ENCODE measurements at regions of chr14 and their contacts with region 1.

Region 1: GRCh38 chr14:106599209-106599608 is 1072.8 kb downstream of the TMEM121 start:
- DNase-seq: no peak
- ATAC-seq: no peak
- H3K4me3 ChIP-seq: no peak overlapping the region
- H3K4me3 Mint-ChIP-seq: no peak overlapping the region
- H3K27ac ChIP-seq: no peak overlapping the region
- H3K27ac Mint-ChIP-seq: no peak overlapping the region
- H3K4me1 ChIP-seq: no peaks in the 10 kb centered on the region
- H3K4me1 Mint-ChIP-seq: no peaks in the 10 kb centered on the region
- H3K27me3 ChIP-seq: no peaks in the 10 kb centered on the region
- H3K27me3 Mint-ChIP-seq: peaks cover 28 to 72% of the 10 kb centered on the region in 2 donors
- CTCF ChIP-seq: no peak

Region 2: DNA sequence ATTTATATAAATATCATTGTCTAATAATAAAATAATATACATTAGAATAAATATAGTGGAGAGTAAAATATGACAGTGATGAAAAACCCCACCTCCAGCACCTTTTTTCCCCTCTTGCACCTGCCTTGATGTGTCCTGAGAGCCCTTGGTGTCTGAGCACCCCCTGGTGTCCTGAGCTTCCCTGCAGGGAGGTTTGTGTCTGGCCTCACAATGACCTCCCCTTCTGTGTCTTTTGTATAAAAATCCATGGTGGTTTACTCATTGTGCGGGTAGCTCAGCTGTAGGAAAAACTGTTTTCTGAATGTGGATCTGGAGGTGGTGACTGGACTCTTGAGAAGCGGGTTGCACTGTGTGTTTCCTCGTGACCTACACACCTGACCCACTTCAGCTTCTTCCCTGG is 435.9 kb before region 1 on chr14:
- intact Hi-C with region 1: no loop called
- DNase-seq: no peak
- ATAC-seq: no peak
- H3K4me3 ChIP-seq: no peak overlapping the region
- H3K4me3 Mint-ChIP-seq: no peak overlapping the region
- H3K27ac ChIP-seq: no peak overlapping the region
- H3K27ac Mint-ChIP-seq: no peak overlapping the region
- H3K4me1 ChIP-seq: peaks cover 5% of the 10 kb centered on the region
- H3K4me1 Mint-ChIP-seq: peaks cover 9 to 10% of the 10 kb centered on the region in 2 donors
- H3K27me3 ChIP-seq: peaks cover 24% of the 10 kb centered on the region
- H3K27me3 Mint-ChIP-seq: peaks cover 56 to 84% of the 10 kb centered on the region in 2 donors
- CTCF ChIP-seq: no peak

Region 3: GRCh38 chr14:106501898-106502297 is 97.3 kb before region 1 on chr14:
- intact Hi-C with region 1: no loop called
- DNase-seq: no peak
- ATAC-seq: no peak
- H3K4me3 ChIP-seq: no peak overlapping the region
- H3K4me3 Mint-ChIP-seq: no peak overlapping the region
- H3K27ac ChIP-seq: no peak overlapping the region
- H3K27ac Mint-ChIP-seq: no peak overlapping the region
- H3K4me1 ChIP-seq: peaks cover 23% of the 10 kb centered on the region
- H3K4me1 Mint-ChIP-seq: peaks cover 31% of the 10 kb centered on the region in 2 donors
- H3K27me3 ChIP-seq: no peaks in the 10 kb centered on the region
- H3K27me3 Mint-ChIP-seq: peaks cover 0 to 9% of the 10 kb centered on the region in 2 donors
- CTCF ChIP-seq: no peak

Region 4: GRCh38 chr14:106547735-106548434 is 51.3 kb before region 1 on chr14:
- intact Hi-C with region 1: no loop called
- DNase-seq: no peak
- ATAC-seq: no peak
- H3K4me3 ChIP-seq: no peak overlapping the region
- H3K4me3 Mint-ChIP-seq: no peak overlapping the region
- H3K27ac ChIP-seq: no peak overlapping the region
- H3K27ac Mint-ChIP-seq: no peak overlapping the region
- H3K4me1 ChIP-seq: no peaks in the 10 kb centered on the region
- H3K4me1 Mint-ChIP-seq: no peaks in the 10 kb centered on the region
- H3K27me3 ChIP-seq: no peaks in the 10 kb centered on the region
- H3K27me3 Mint-ChIP-seq: peaks cover 15 to 31% of the 10 kb centered on the region in 2 donors
- CTCF ChIP-seq: no peak

Region 5: DNA sequence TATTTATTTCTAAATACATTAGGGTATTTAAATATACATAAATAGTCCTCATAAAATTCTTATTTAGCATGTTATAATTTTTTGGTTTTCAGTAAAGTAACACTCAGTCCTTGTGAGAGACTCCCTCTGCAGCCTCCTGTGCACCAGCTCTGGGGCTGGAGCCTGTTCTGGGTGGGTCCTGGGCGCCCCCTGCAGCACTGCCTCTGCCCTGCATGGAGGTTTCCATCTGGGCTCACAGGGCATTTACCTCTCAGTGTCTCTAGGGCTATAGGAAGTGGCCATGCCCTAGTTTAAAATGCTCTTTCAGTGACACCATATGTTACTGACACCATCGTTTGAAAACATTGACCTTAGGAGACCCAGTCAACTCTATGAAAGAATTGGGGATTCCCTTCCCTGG is 82.4 kb after region 1 on chr14:
- intact Hi-C with region 1: loop called (anchors 2 kb)
- DNase-seq: no peak
- ATAC-seq: peak; percentile 56 to 86 (median 80)
- H3K4me3 ChIP-seq: no peak overlapping the region
- H3K4me3 Mint-ChIP-seq: no peak overlapping the region
- H3K27ac ChIP-seq: no peak overlapping the region
- H3K27ac Mint-ChIP-seq: no peak overlapping the region
- H3K4me1 ChIP-seq: no peaks in the 10 kb centered on the region
- H3K4me1 Mint-ChIP-seq: no peaks in the 10 kb centered on the region
- H3K27me3 ChIP-seq: no peaks in the 10 kb centered on the region
- H3K27me3 Mint-ChIP-seq: peaks cover 24 to 48% of the 10 kb centered on the region in 2 donors
- CTCF ChIP-seq: peak; percentile 15